RWPE1 (cell line): ENCODE measurements at regions of chr7 and their contacts with region 1.

Region 1: GRCh38 chr7:4159761-4160554 is 522.1 kb upstream of the FOXK1 start:
- DNase-seq: peak; percentile 82
- H3K27ac ChIP-seq: peak overlapping the region; percentile 65
- CTCF ChIP-seq: no peak

Region 2: GRCh38 chr7:4178416-4178815 is 18.5 kb after region 1 on chr7:
- CTCF ChIA-PET with region 1: interaction called, 10 read pairs
- POLR2A ChIA-PET with region 1: no interaction called
- DNase-seq: no peak
- H3K27ac ChIP-seq: no peak overlapping the region
- CTCF ChIP-seq: no peak